ENCODE measurements at regions of chr18 and their contacts with region 1.

Region 1: DNA sequence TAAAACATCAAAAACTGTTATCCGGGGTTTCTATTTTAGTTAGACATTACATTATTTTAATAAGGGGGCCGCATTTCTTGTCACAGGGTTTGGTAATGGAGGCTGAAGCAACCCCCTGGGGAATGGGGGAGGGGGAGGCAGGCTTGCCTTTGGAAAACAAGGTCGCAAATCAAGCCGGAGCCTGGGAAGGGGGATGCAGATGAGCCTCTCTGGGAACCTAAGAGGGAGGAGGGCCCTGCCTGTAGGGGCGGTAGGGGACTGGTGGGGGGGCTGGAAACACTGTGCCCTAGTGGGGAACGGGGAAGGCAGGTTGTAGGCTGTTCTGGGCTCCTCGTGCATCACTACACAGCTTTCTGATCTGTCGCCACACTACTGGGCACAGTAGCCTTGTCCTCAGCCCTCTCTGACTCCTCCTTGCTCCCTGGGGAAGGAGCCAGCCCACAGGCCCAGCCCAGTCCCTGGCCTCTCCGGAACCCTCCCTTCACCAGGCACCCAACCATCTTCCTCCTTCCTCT is 170.2 kb upstream of the SMAD2 start:
- DNase-seq: no peak
- H3K4me3 ChIP-seq: no peak overlapping the region
- H3K4me3 Mint-ChIP-seq: no peak overlapping the region
- H3K27ac ChIP-seq: no peak overlapping the region
- H3K27ac Mint-ChIP-seq: no peak overlapping the region
- H3K4me1 ChIP-seq: no peaks in the 10 kb centered on the region
- H3K4me1 Mint-ChIP-seq: no peaks in the 10 kb centered on the region
- H3K27me3 ChIP-seq: no peaks in the 10 kb centered on the region
- H3K27me3 Mint-ChIP-seq: peaks cover 10 to 15% (median 11%) of the 10 kb centered on the region in 3 donors
- CTCF ChIP-seq: no peak

Region 2: DNA sequence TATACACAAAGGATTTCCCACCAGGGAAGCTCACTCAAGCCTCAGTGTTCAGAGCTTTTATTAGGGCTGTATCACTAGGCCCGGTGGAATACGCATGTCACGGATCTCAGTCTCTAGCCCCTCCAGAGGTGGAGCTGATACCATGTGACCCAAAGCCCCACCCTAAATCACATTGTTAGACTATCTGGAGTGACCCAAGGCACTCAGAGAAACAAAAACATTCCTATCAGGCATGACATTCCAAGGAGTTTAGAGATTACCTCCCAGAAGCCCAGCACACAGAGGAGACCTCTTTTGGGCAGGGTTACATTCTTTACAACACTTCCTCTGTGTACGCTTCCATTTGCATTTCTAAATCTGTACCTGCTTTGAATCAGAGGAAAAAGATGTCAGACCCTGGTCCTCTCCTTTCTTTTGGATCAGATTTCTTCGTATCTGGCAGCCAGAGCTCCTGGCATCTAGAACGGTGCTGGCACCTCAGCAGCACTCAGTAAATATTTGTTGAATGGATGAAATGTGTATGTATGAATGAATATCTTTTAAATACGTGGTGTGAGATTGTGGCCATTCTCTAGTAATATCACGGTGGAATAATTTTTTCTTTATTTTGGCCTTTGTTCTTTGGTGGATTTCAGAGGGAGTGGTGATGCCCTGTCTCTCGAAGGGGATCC is 132.6 kb before region 1 on chr18:
- intact Hi-C with region 1: no loop called
- DNase-seq: no peak
- H3K4me3 ChIP-seq: no peak overlapping the region
- H3K4me3 Mint-ChIP-seq: no peak overlapping the region
- H3K27ac ChIP-seq: no peak overlapping the region
- H3K27ac Mint-ChIP-seq: peak overlapping the region in 1 of 7 donors; percentile 56
- H3K4me1 ChIP-seq: peaks cover 25 to 26% of the 10 kb centered on the region in 2 donors
- H3K4me1 Mint-ChIP-seq: peaks cover 28% of the 10 kb centered on the region
- H3K27me3 ChIP-seq: no peaks in the 10 kb centered on the region
- H3K27me3 Mint-ChIP-seq: peaks cover 3 to 8% (median 4%) of the 10 kb centered on the region in 3 donors
- CTCF ChIP-seq: no peak

Region 3: DNA sequence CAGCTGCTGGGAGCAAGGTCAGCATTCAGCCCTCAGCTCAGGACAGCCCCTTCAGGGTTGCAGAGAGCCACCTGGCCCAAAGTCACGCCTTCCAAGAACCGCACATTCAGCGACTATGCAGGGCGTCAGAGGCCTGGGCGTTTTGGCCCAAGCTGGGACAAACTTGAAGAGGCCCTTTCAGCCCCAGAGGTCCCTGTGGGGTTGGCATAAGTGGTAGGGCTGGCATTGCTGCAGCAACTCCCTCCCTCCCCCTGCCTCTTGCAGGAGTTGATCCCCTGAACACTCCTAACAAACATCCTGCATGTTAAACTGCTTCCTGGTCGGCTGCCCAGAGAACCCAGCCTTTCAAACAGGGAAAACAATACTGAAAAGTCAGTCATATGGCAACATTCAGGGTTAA is 22.6 kb after region 1 on chr18:
- intact Hi-C with region 1: loop called in 1 of 2 experiments (anchors 2 kb)
- DNase-seq: no peak
- H3K4me3 ChIP-seq: no peak overlapping the region
- H3K4me3 Mint-ChIP-seq: no peak overlapping the region
- H3K27ac ChIP-seq: no peak overlapping the region
- H3K27ac Mint-ChIP-seq: no peak overlapping the region
- H3K4me1 ChIP-seq: no peaks in the 10 kb centered on the region
- H3K4me1 Mint-ChIP-seq: no peaks in the 10 kb centered on the region
- H3K27me3 ChIP-seq: peaks cover 0 to 14% of the 10 kb centered on the region in 2 donors
- H3K27me3 Mint-ChIP-seq: peaks cover 8 to 21% (median 16%) of the 10 kb centered on the region in 3 donors
- CTCF ChIP-seq: no peak

Region 4: DNA sequence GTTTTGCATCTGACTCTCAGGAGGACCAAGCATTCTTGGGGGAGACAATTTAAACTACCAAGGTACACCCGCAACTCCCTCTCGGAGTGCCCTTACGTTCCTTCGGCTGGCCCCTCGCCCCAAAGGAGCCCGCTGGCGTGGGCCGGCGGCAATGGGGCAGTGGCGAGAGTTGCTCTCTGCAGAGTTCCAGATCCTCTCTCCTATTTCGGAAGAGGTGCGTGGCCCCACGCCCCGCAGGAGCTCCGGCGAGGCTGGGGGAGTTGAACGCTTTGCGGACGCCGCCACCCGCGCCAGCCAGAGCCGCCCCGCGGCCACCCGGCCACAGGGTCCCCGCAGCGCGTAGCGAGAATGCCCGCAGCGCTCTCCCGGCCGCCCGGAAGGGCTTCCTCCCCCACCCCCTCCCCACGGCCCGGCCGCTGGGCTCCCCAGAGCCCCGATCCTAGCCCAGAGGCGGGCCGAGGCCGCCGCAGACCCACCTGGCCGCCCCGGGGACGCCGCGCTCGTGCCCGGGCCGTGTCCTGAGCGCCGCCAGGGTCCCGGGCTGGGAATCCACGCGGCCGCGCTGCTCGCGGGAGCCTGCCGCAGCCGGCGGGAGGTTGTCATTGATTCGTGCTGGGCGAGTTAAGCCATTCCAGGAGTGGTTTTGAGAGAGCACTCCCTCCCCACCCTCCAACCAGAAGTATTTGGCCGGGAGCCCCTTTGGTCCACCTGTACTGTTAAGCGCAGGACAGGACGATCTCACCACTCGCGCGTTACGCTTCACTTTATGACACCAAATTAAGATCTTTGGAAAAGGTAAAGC is 36.0 kb after region 1 on chr18:
- intact Hi-C with region 1: no loop called
- DNase-seq: no peak
- H3K4me3 ChIP-seq: no peak overlapping the region
- H3K4me3 Mint-ChIP-seq: peak overlapping the region in 1 of 2 donors; percentile 82
- H3K27ac ChIP-seq: no peak overlapping the region
- H3K27ac Mint-ChIP-seq: peak overlapping the region in 1 of 7 donors; percentile 28
- H3K4me1 ChIP-seq: peaks cover 8 to 13% of the 10 kb centered on the region in 2 donors
- H3K4me1 Mint-ChIP-seq: peaks cover 2% of the 10 kb centered on the region
- H3K27me3 ChIP-seq: peaks cover 48 to 69% of the 10 kb centered on the region in 2 donors
- H3K27me3 Mint-ChIP-seq: peaks cover 61 to 76% (median 73%) of the 10 kb centered on the region in 3 donors
- CTCF ChIP-seq: no peak

Region 5: GRCh38 chr18:48161191-48161910 is 60.6 kb after region 1 on chr18:
- intact Hi-C with region 1: no loop called
- DNase-seq: peak; percentile 18 to 55 (median 45)
- H3K4me3 ChIP-seq: peak overlapping the region; percentile 48 to 77 (median 51)
- H3K4me3 Mint-ChIP-seq: peak overlapping the region; percentile 78 to 88
- H3K27ac ChIP-seq: no peak overlapping the region
- H3K27ac Mint-ChIP-seq: peak overlapping the region in 3 of 7 donors; percentile 37 to 83 (median 45)
- H3K4me1 ChIP-seq: peaks cover 26 to 30% of the 10 kb centered on the region in 2 donors
- H3K4me1 Mint-ChIP-seq: peaks cover 17% of the 10 kb centered on the region
- H3K27me3 ChIP-seq: peaks cover 3 to 12% of the 10 kb centered on the region in 2 donors
- H3K27me3 Mint-ChIP-seq: peaks cover 13 to 42% (median 22%) of the 10 kb centered on the region in 3 donors
- CTCF ChIP-seq: no peak